ENCODE measurements at regions of chr10 and their contacts with region 1.

Region 1: DNA sequence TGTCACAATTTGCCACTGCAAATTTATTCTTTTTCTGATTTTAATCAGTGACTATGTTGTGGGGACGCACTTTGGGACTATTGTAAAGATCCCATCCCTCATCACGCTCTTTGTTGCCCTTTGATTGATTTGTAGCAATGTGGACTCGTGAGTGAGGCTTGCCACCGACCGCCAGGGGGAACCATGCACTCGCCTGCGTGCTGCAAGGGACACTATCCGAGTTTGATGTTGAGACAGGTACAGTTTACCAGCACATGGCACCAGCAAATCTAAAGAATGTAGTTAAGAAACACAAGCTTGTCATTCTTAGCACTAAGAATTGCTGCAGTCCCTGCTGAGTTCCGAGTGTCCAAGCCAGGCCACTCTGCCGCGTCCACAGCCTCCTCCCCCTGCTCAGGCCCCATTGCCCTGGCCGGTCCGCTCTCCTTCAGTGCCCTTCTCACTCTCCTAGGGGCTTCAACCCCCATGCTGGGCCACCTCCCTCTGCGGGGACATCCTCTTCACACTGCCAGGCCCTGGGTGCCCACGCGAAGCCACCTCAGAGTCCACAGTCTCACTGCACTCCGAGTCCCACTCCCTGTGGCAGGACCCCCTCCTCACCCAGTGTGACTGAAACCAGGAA is 2.0 kb upstream of the SFTPA2 start:
- DNase-seq: peak; percentile 41
- H3K4me3 Mint-ChIP-seq: no peak overlapping the region
- H3K27ac Mint-ChIP-seq: no peak overlapping the region
- H3K4me1 Mint-ChIP-seq: no peaks in the 10 kb centered on the region
- H3K27me3 Mint-ChIP-seq: peaks cover 22% of the 10 kb centered on the region

Region 2: GRCh38 chr10:79579361-79579760 is 17.1 kb after region 1 on chr10:
- intact Hi-C with region 1: no loop called
- DNase-seq: no peak
- H3K4me3 Mint-ChIP-seq: no peak overlapping the region
- H3K27ac Mint-ChIP-seq: no peak overlapping the region
- H3K4me1 Mint-ChIP-seq: peaks cover 1% of the 10 kb centered on the region
- H3K27me3 Mint-ChIP-seq: peaks cover 24% of the 10 kb centered on the region

Region 3: GRCh38 chr10:79608505-79609375 is 46.5 kb after region 1 on chr10:
- intact Hi-C with region 1: no loop called
- DNase-seq: no peak
- H3K4me3 Mint-ChIP-seq: no peak overlapping the region
- H3K27ac Mint-ChIP-seq: no peak overlapping the region
- H3K4me1 Mint-ChIP-seq: no peaks in the 10 kb centered on the region
- H3K27me3 Mint-ChIP-seq: peaks cover 6% of the 10 kb centered on the region

Region 4: GRCh38 chr10:79929409-79929904 is 367.2 kb after region 1 on chr10:
- intact Hi-C with region 1: loop called (anchors 5 kb)
- DNase-seq: peak; percentile 54
- H3K4me3 Mint-ChIP-seq: no peak overlapping the region
- H3K27ac Mint-ChIP-seq: no peak overlapping the region
- H3K4me1 Mint-ChIP-seq: no peaks in the 10 kb centered on the region
- H3K27me3 Mint-ChIP-seq: peaks cover 29% of the 10 kb centered on the region

Region 5: GRCh38 chr10:81192221-81192788 is 1630.1 kb after region 1 on chr10:
- intact Hi-C with region 1: no loop called
- DNase-seq: no peak
- H3K4me3 Mint-ChIP-seq: no peak overlapping the region
- H3K27ac Mint-ChIP-seq: no peak overlapping the region
- H3K4me1 Mint-ChIP-seq: no peaks in the 10 kb centered on the region
- H3K27me3 Mint-ChIP-seq: no peaks in the 10 kb centered on the region

Measured in activated T-helper 2 cell treated with anti-CD3 and anti-CD28 coated beads, Interferon-gamma antibody, Interleukin-2, Interleukin-4, amounts not matched to agents 10 μg/mL and 5 μg/mL and 100 μg/mL, durations not matched to agents 14 hours and 24 hours and 36 hours (primary cell).